Activated CD8-positive, alpha-beta T cell treated with anti-CD3 and anti-CD28 coated beads for 36 hours (primary cell): ENCODE measurements at regions of chr11 and their contacts with region 1.

Region 1: GRCh38 chr11:102293873-102294601 is 23.2 kb upstream of the BIRC3 start:
- DNase-seq: peak; percentile 30
- ATAC-seq: peak; percentile 95
- H3K4me3 Mint-ChIP-seq: peak overlapping the region; percentile 78
- H3K27ac Mint-ChIP-seq: peak overlapping the region; percentile 96
- H3K4me1 Mint-ChIP-seq: peaks cover 24% of the 10 kb centered on the region
- H3K27me3 Mint-ChIP-seq: no peaks in the 10 kb centered on the region
- CTCF ChIP-seq: peak; percentile 69

Region 2: GRCh38 chr11:102155676-102156075 is 138.4 kb before region 1 on chr11:
- CTCF ChIA-PET with region 1: no interaction called
- POLR2A ChIA-PET with region 1: no interaction called
- intact Hi-C with region 1: no loop called
- DNase-seq: no peak
- ATAC-seq: no peak
- H3K4me3 Mint-ChIP-seq: no peak overlapping the region
- H3K27ac Mint-ChIP-seq: no peak overlapping the region
- H3K4me1 Mint-ChIP-seq: no peaks in the 10 kb centered on the region
- H3K27me3 Mint-ChIP-seq: peaks cover 1% of the 10 kb centered on the region
- CTCF ChIP-seq: no peak

Region 3: GRCh38 chr11:102225689-102226568 is 68.1 kb before region 1 on chr11:
- CTCF ChIA-PET with region 1: no interaction called
- POLR2A ChIA-PET with region 1: no interaction called
- intact Hi-C with region 1: no loop called
- DNase-seq: no peak
- ATAC-seq: no peak
- H3K4me3 Mint-ChIP-seq: no peak overlapping the region
- H3K27ac Mint-ChIP-seq: no peak overlapping the region
- H3K4me1 Mint-ChIP-seq: no peaks in the 10 kb centered on the region
- H3K27me3 Mint-ChIP-seq: peaks cover 2% of the 10 kb centered on the region
- CTCF ChIP-seq: no peak

Region 4: DNA sequence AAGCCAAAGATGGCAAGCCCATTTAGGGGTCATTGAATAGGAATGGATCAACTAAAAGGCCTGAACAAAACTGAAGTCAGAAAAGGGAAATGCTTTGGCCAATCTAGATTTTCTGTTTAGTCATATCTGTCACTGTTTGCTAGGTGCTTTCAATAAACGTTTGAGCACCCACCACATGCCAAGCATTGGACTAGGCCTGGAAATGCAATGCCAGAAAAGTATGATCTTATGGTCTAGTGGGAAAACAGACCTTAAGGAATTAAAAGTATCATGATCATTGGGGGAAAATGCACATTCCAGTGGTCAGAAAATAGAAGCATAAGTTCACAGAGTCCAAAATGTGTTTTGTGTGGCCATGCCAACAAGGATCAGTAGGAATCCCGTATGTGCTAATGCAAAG is 53.5 kb before region 1 on chr11:
- CTCF ChIA-PET with region 1: no interaction called
- POLR2A ChIA-PET with region 1: no interaction called
- intact Hi-C with region 1: no loop called
- DNase-seq: no peak
- ATAC-seq: no peak
- H3K4me3 Mint-ChIP-seq: no peak overlapping the region
- H3K27ac Mint-ChIP-seq: no peak overlapping the region
- H3K4me1 Mint-ChIP-seq: no peaks in the 10 kb centered on the region
- H3K27me3 Mint-ChIP-seq: peaks cover 8% of the 10 kb centered on the region
- CTCF ChIP-seq: no peak

Region 5: DNA sequence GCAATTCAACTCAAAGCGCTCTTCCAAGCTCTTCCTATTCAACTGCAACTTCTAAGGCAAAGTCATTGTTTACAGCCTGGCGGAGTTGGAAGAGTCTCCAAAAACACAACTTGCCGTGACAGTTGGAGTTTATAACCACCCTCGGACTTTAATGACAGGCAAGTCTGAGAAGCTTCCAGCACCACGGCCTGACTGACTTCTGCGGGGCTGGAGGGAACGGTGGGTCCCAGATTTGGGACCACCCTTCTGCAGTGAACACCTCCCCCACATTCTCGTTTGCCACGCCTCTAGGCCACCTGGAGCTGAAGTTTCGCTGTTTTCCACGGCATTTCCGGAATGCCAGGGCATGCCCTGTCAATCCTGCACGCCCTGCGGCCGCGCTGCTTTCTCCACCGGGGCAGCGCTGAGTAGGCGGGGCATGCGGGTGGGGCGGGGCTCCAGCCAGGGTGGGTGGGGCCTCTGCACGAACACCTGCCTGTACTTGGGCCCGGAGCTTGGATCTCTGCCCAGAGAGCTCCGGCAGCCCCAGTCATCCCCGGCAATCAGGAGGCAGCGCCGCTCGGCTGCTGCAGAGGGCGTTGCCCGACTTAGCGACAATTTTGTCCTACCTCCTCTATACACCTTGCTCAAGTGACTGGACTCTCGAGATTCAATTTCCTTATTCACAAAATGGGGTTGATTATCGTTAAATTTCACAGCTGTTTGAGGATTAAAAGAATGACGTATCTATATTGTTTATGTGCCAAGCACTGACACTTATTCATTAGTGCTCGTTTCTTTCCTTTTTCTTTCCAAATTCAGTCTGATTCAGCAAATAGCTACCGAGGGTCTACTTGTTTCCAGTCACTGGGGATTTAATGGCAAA is 25.5 kb before region 1 on chr11:
- CTCF ChIA-PET with region 1: interaction called, 20 read pairs
- POLR2A ChIA-PET with region 1: no interaction called
- intact Hi-C with region 1: no loop called
- DNase-seq: peak; percentile 87
- ATAC-seq: peak; percentile 99
- H3K4me3 Mint-ChIP-seq: peak overlapping the region; percentile 68
- H3K27ac Mint-ChIP-seq: no peak overlapping the region
- H3K4me1 Mint-ChIP-seq: peaks cover 19% of the 10 kb centered on the region
- H3K27me3 Mint-ChIP-seq: peaks cover 15% of the 10 kb centered on the region
- CTCF ChIP-seq: peak; percentile 66

Region 6: GRCh38 chr11:102306048-102306585 is 12.1 kb after region 1 on chr11:
- CTCF ChIA-PET with region 1: interaction called, 403 read pairs
- POLR2A ChIA-PET with region 1: interaction called, 5 read pairs
- intact Hi-C with region 1: no loop called
- DNase-seq: peak; percentile 38
- ATAC-seq: peak; percentile 40
- H3K4me3 Mint-ChIP-seq: peak overlapping the region; percentile 51
- H3K27ac Mint-ChIP-seq: peak overlapping the region; percentile 81
- H3K4me1 Mint-ChIP-seq: peaks cover 55% of the 10 kb centered on the region
- H3K27me3 Mint-ChIP-seq: no peaks in the 10 kb centered on the region
- CTCF ChIP-seq: peak; percentile 22

Region 7: GRCh38 chr11:102317099-102317767 is 23.2 kb after region 1 on chr11 and contains the start of gene BIRC3:
- CTCF ChIA-PET with region 1: interaction called, 403 read pairs
- POLR2A ChIA-PET with region 1: interaction called, 10 read pairs
- intact Hi-C with region 1: loop called (anchors 2 kb)
- DNase-seq: peak; percentile 98
- ATAC-seq: peak; percentile 87
- H3K4me3 Mint-ChIP-seq: peak within 1 kb of the TSS; percentile 100
- H3K27ac Mint-ChIP-seq: peak within 1 kb of the TSS; percentile 99
- H3K4me1 Mint-ChIP-seq: peaks cover 62% of the 10 kb centered on the region
- H3K27me3 Mint-ChIP-seq: no peaks in the 10 kb centered on the region
- CTCF ChIP-seq: no peak
- total RNA-seq, gene BIRC3: 102 to 108 TPM

Region 8: GRCh38 chr11:102323542-102324251 is 29.7 kb after region 1 on chr11:
- CTCF ChIA-PET with region 1: interaction called, 403 read pairs
- POLR2A ChIA-PET with region 1: interaction called, 6 read pairs
- intact Hi-C with region 1: loop called (anchors 2 kb)
- DNase-seq: no peak
- ATAC-seq: no peak
- H3K4me3 Mint-ChIP-seq: no peak overlapping the region
- H3K27ac Mint-ChIP-seq: no peak overlapping the region
- H3K4me1 Mint-ChIP-seq: peaks cover 57% of the 10 kb centered on the region
- H3K27me3 Mint-ChIP-seq: no peaks in the 10 kb centered on the region
- CTCF ChIP-seq: no peak

Region 9: DNA sequence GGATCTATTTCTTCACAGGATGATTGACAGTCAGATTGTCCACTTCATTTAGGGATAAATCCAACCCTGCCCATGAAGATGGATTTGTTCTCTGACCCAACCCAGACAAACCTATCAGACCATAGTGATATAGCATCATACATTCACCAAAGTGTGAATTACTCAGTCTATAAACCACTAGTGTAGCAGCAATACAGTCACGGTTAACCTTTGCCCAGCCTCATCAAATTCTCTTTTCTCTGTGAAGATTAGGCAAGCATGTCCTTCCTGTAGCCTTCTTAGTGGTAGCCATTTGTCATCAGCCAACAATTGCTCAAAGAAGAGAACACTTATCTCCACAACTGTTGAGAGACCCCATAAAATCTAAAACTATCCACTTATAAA is 38.6 kb after region 1 on chr11:
- CTCF ChIA-PET with region 1: interaction called, 18 read pairs
- POLR2A ChIA-PET with region 1: no interaction called
- intact Hi-C with region 1: loop called (anchors 5 kb)
- DNase-seq: no peak
- ATAC-seq: peak; percentile 70
- H3K4me3 Mint-ChIP-seq: no peak overlapping the region
- H3K27ac Mint-ChIP-seq: peak overlapping the region; percentile 51
- H3K4me1 Mint-ChIP-seq: peaks cover 13% of the 10 kb centered on the region
- H3K27me3 Mint-ChIP-seq: no peaks in the 10 kb centered on the region
- CTCF ChIP-seq: no peak

Region 10: DNA sequence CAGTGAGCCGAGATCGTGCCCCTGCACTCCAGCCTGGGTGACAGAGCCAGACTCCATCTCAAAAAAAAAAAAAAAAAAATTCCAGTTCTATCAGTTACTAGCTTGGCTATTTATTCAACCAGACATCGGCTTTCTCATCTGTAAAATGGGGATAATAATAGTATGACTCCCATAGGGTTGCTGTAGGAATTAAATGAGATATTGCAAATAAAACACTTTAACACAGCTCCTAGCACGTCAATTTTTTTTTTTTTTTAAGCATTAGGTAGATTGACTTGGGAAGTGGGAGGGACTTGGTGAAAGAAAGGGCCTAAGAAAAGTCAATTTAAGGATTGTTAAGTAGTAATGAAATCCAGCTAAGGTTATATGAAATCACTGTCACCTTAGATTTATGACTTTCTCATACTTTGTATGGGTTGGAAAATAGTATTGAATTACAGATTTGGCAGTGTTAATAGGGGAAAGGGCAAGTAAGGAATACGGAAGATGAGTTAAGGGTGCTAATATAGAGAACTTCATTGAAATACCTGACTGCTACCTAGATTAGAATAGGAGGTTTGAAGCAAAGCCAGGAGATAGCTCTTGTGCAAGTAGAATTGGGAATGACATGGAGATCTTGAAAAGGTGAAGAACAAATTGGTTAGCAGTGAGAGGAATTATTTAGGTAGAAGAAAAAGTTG is 81.8 kb after region 1 on chr11:
- CTCF ChIA-PET with region 1: no interaction called
- POLR2A ChIA-PET with region 1: no interaction called
- intact Hi-C with region 1: no loop called
- DNase-seq: no peak
- ATAC-seq: no peak
- H3K4me3 Mint-ChIP-seq: no peak overlapping the region
- H3K27ac Mint-ChIP-seq: no peak overlapping the region
- H3K4me1 Mint-ChIP-seq: peaks cover 30% of the 10 kb centered on the region
- H3K27me3 Mint-ChIP-seq: no peaks in the 10 kb centered on the region
- CTCF ChIP-seq: no peak